CD4-positive, alpha-beta T cell (primary cell): ENCODE measurements at regions of chr6 and their contacts with region 1.

Region 1: DNA sequence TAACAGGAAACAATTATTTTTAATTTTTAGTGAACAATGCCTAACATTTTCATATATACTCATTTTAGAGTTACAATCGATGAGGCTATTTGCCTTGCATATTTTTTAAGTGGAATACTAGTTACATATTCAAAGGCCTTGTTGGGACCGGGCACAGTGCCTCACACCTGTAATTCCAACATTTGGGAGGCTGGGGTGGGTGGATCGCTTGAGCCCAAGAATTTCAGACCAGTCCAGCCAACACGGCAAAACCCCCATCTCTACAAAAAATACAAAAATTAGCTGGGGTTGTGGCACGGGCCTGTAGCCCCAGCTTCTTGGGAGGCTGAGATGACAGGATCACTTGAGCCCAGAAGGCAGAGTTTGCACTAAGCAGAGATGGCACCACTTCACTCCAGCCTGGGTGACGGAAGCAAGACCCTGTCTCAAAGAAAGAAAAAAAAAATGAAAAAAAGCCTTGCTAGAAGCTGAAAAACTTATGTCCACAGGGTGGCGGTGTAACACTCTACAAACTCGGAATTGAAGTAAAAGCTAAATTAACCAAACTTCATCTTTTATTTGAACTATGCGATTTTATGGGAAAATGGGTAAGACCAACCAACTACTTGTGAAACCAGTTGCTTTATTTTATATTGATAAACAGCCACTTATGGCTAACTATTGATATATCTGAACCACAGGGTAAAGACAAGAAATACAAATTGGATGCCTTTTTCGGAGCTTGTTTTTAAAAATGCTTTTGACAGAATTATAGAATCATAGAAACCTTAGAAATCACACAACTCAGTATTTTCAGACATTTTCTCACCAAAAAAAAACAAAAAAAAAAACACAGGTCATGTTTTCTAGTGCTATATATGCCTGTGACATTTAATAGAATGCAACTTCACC is 24.1 kb upstream of the ROS1 start:
- DNase-seq: peak; percentile 13 to 82 (median 50)
- ATAC-seq: peak; percentile 52
- H3K4me3 ChIP-seq: no peak overlapping the region
- H3K4me3 Mint-ChIP-seq: no peak overlapping the region
- H3K27ac ChIP-seq: no peak overlapping the region
- H3K27ac Mint-ChIP-seq: no peak overlapping the region
- H3K4me1 ChIP-seq: no peaks in the 10 kb centered on the region
- H3K4me1 Mint-ChIP-seq: no peaks in the 10 kb centered on the region
- H3K27me3 ChIP-seq: peaks cover 0 to 28% of the 10 kb centered on the region in 2 experiments
- H3K27me3 Mint-ChIP-seq: peaks cover 54% of the 10 kb centered on the region
- CTCF ChIP-seq: peak; percentile 78

Region 2: GRCh38 chr6:117381749-117382148 is 68.0 kb before region 1 on chr6:
- CTCF ChIA-PET with region 1: no interaction called
- POLR2A ChIA-PET with region 1: no interaction called
- intact Hi-C with region 1: no loop called
- DNase-seq: no peak
- ATAC-seq: no peak
- H3K4me3 ChIP-seq: no peak overlapping the region
- H3K4me3 Mint-ChIP-seq: no peak overlapping the region
- H3K27ac ChIP-seq: no peak overlapping the region
- H3K27ac Mint-ChIP-seq: no peak overlapping the region
- H3K4me1 ChIP-seq: no peaks in the 10 kb centered on the region
- H3K4me1 Mint-ChIP-seq: no peaks in the 10 kb centered on the region
- H3K27me3 ChIP-seq: peaks cover 4 to 16% of the 10 kb centered on the region in 2 experiments
- H3K27me3 Mint-ChIP-seq: peaks cover 16% of the 10 kb centered on the region
- CTCF ChIP-seq: no peak

Region 3: DNA sequence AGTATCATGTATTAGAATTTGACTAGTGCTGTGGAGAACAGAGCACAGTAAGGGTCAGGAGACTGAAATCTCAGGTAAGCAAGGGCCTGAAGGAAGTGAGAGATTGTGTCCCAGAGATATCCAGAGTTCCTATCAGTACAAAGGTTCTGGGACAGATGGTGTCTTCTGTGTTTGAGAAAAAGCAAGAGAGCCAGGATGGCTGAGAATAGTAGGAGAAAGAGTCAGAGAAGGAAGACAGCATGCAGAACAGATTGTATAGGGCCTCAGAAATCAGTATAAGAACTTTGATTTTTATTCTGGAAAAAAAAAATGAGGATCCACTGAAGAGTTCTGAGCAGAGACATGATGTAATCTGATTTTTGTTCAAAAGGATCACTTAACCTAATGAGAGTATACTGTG is 1023.5 kb after region 1 on chr6:
- CTCF ChIA-PET with region 1: no interaction called
- POLR2A ChIA-PET with region 1: no interaction called
- intact Hi-C with region 1: loop called in 1 of 2 experiments (anchors 5 kb)
- DNase-seq: no peak
- ATAC-seq: no peak
- H3K4me3 ChIP-seq: no peak overlapping the region
- H3K4me3 Mint-ChIP-seq: no peak overlapping the region
- H3K27ac ChIP-seq: no peak overlapping the region
- H3K27ac Mint-ChIP-seq: no peak overlapping the region
- H3K4me1 ChIP-seq: no peaks in the 10 kb centered on the region
- H3K4me1 Mint-ChIP-seq: peaks cover 7% of the 10 kb centered on the region
- H3K27me3 ChIP-seq: no peaks in the 10 kb centered on the region
- H3K27me3 Mint-ChIP-seq: no peaks in the 10 kb centered on the region
- CTCF ChIP-seq: no peak

Region 4: GRCh38 chr6:118918326-118918725 is 1468.5 kb after region 1 on chr6:
- CTCF ChIA-PET with region 1: no interaction called
- POLR2A ChIA-PET with region 1: no interaction called
- intact Hi-C with region 1: no loop called
- DNase-seq: no peak
- ATAC-seq: no peak
- H3K4me3 ChIP-seq: no peak overlapping the region
- H3K4me3 Mint-ChIP-seq: no peak overlapping the region
- H3K27ac ChIP-seq: no peak overlapping the region
- H3K27ac Mint-ChIP-seq: peak overlapping the region; percentile 44
- H3K4me1 ChIP-seq: no peaks in the 10 kb centered on the region
- H3K4me1 Mint-ChIP-seq: peaks cover 9% of the 10 kb centered on the region
- H3K27me3 ChIP-seq: no peaks in the 10 kb centered on the region
- H3K27me3 Mint-ChIP-seq: no peaks in the 10 kb centered on the region
- CTCF ChIP-seq: no peak